ENCODE measurements at regions of chr2 and their contacts with region 1.

Region 1: GRCh38 chr2:141586985-141587384 is 543.8 kb downstream of the LRP1B start:
- DNase-seq: no peak
- H3K4me3 ChIP-seq: no peak overlapping the region
- H3K27ac ChIP-seq: no peak overlapping the region
- H3K4me1 ChIP-seq: peaks cover 5% of the 10 kb centered on the region
- H3K27me3 ChIP-seq: no peaks in the 10 kb centered on the region
- CTCF ChIP-seq: no peak

Region 2: DNA sequence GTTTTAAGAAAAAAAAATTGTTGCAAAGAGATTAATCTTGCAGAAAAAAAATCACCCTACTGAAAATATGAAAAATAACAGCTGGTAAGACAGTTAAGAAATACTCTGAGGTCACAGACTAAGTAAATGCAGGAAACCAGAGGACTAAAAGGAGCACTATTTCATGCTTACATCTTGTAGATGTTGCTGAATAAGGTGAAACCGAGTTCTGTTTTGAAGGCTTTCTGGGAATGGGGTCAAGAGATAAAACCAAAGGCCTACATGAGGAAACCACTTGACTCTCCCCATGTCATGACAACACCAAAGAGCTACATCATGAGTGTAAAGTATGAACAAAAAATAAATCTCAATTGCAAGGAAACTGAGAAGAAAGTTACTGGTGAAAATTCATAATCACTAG is 346.2 kb after region 1 on chr2:
- CTCF ChIA-PET with region 1: interaction called, 13 read pairs
- POLR2A ChIA-PET with region 1: no interaction called
- intact Hi-C with region 1: no loop called
- DNase-seq: no peak
- H3K4me3 ChIP-seq: no peak overlapping the region
- H3K27ac ChIP-seq: no peak overlapping the region
- H3K4me1 ChIP-seq: no peaks in the 10 kb centered on the region
- H3K27me3 ChIP-seq: no peaks in the 10 kb centered on the region
- CTCF ChIP-seq: no peak